ENCODE measurements at regions of chr14 and their contacts with region 1.

Region 1: DNA sequence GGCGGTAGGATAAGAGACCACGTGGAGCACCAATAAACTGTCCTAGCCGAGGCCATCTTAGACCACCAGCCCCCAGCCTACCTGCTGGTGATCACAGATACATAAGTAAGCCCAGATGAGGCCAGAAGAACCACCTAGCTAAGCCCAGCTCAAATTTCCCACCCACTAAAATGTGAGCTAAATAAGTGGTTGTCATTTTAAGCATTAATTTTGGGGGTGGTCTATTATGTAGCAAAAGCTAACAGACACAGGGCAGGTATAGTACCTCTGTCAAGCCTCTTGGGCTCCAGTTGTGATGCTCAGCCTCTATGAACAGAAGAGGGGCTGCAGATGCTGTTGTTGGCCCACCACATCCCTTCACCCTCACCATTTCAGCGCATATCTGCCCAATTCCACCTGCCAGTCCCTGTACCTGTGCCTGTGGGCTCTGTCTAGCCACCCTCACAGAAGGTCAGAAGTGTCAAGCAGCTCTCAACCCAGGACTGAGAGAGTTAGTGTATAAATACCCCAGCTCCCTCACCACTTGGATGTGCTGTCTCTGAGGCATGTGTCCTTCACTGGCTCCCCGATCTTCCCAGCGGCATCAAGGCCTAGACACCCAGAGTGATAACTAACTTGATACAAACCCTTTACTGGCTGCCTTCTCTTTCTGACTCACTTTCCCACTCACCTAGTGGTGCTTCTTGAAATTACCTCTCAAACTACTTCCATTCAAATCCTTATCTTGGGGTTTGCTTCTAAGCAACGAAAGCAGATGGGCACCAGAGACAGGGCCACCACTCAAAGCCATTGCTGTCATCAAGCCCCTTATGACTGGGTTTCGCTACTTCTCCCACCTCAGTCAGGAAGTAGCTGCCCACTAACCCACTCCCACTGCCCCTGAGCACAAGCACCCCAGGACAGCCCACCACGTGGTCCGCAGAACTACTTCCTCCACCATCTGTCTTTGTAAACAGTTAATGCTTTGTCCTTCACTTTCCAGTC is 17.4 kb downstream of the ZFP36L1 start:
- DNase-seq: no peak
- H3K4me3 ChIP-seq: no peak overlapping the region
- H3K27ac ChIP-seq: no peak overlapping the region
- H3K4me1 ChIP-seq: peaks cover 0 to 3% (median 0%) of the 10 kb centered on the region in 4 experiments; a peak in 2 of 7 replicates
- H3K27me3 ChIP-seq: no peaks in the 10 kb centered on the region
- CTCF ChIP-seq: peak in 2 of 3 experiments; percentile 26 to 48; a peak in 2 of 4 replicates
- EP300 ChIP-seq: no peak
- POLR2A ChIP-seq: no peak
- RAD21 ChIP-seq: peak; percentile 41 to 57

Region 2: DNA sequence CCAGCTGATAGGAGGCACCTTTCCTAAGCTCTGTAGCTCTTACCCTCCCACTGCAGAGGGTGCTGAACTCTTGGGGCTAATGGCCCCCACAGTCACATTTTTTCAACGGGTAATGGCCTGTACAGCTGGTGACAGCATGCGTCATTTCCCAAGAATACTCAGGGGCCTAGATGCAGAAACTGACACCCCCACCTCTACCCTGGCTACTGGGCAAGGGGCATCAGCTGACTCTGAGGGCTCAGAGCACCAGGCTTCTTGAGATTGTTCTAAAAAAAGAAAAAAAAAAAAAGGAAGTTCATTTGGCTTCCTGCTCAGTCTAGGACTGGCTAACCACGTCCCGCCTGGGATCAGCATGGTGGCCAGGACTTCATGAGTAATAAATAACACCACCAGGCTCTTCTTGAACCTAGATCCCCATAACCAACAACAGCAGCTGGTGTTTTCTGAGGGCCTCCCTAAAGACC is 17.8 kb before region 1 on chr14:
- CTCF ChIA-PET with region 1: interaction called, 28 read pairs
- POLR2A ChIA-PET with region 1: interaction called, 3 read pairs
- DNase-seq: no peak
- H3K4me3 ChIP-seq: no peak overlapping the region
- H3K27ac ChIP-seq: no peak overlapping the region
- H3K4me1 ChIP-seq: peaks cover 2 to 4% (median 4%) of the 10 kb centered on the region in 4 experiments; a peak in 5 of 7 replicates
- H3K27me3 ChIP-seq: no peaks in the 10 kb centered on the region
- CTCF ChIP-seq: no peak
- EP300 ChIP-seq: no peak
- POLR2A ChIP-seq: no peak
- RAD21 ChIP-seq: no peak

Region 3: DNA sequence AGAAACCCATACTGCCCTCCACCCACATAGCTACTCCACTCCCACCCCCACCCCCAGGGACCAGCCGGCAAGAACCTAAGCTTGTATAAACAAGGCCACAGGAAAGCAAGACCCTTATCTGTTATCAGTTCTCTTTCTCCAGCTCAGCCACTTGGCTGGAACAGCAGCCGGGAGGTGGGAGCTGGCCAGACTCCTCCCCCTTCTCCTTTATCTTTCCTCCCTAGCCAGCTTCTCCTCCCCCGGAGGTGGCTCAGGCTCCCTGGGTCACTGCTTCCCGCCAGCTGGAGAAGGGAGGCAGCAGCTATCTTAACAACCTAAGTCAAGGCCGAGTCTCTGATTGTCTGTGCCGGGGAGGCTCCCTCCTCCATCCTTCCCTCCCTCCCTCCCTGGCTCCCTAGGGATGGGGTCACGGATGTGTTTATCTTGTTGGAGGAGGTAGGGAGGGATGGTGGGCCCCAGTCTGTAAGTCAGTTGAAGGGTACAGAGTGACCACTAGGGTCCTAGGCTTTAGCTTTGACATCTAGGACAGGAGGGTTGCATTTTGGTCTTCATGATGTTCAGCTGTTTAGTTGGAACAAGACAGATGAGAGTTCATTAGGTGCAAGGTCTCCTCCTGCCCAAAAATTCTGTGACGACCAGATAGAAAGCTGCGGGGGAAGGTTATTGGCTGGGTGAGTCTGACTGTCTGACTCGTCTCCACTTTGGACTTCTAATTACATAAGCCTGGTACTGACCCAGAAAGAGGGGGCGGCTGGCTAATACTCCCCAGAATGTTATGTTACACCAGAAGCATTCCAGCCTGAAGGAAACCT is 12.3 kb before region 1 on chr14:
- CTCF ChIA-PET with region 1: interaction called, 28 read pairs
- POLR2A ChIA-PET with region 1: no interaction called
- DNase-seq: peak in 1 of 2 experiments; percentile 62
- H3K4me3 ChIP-seq: no peak overlapping the region
- H3K27ac ChIP-seq: no peak overlapping the region
- H3K4me1 ChIP-seq: peaks cover 2 to 12% (median 7%) of the 10 kb centered on the region in 4 experiments; a peak in 6 of 7 replicates
- H3K27me3 ChIP-seq: no peaks in the 10 kb centered on the region
- CTCF ChIP-seq: no peak
- EP300 ChIP-seq: no peak
- POLR2A ChIP-seq: no peak
- RAD21 ChIP-seq: no peak; a peak in 1 of 4 replicates

Region 4: GRCh38 chr14:68788996-68789820 is 13.8 kb after region 1 on chr14:
- CTCF ChIA-PET with region 1: interaction called, 31 read pairs
- POLR2A ChIA-PET with region 1: interaction called, 197 read pairs
- DNase-seq: peak in 1 of 2 experiments; percentile 71
- H3K4me3 ChIP-seq: peak overlapping the region in 3 of 4 experiments; percentile 9 to 91 (median 14); a peak in 3 of 8 replicates
- H3K27ac ChIP-seq: no peak overlapping the region
- H3K4me1 ChIP-seq: peaks cover 0 to 22% (median 12%) of the 10 kb centered on the region in 4 experiments; a peak in 6 of 7 replicates
- H3K27me3 ChIP-seq: no peaks in the 10 kb centered on the region
- CTCF ChIP-seq: peak; percentile 63 to 94 (median 67)
- EP300 ChIP-seq: no peak
- POLR2A ChIP-seq: no peak; a peak in 1 of 3 replicates
- RAD21 ChIP-seq: peak; percentile 71 to 79

Region 5: GRCh38 chr14:68807148-68807600 is 31.7 kb after region 1 on chr14:
- CTCF ChIA-PET with region 1: no interaction called
- POLR2A ChIA-PET with region 1: no interaction called
- DNase-seq: peak in 1 of 2 experiments; percentile 40
- H3K4me3 ChIP-seq: no peak overlapping the region
- H3K27ac ChIP-seq: no peak overlapping the region
- H3K4me1 ChIP-seq: peaks cover 0 to 4% (median under 1%) of the 10 kb centered on the region in 4 experiments; a peak in 3 of 7 replicates
- H3K27me3 ChIP-seq: no peaks in the 10 kb centered on the region
- CTCF ChIP-seq: no peak
- EP300 ChIP-seq: no peak
- POLR2A ChIP-seq: no peak
- RAD21 ChIP-seq: no peak

Region 6: GRCh38 chr14:69643443-69644164 is 868.2 kb after region 1 on chr14:
- CTCF ChIA-PET with region 1: no interaction called
- POLR2A ChIA-PET with region 1: no interaction called
- DNase-seq: no peak
- H3K4me3 ChIP-seq: no peak overlapping the region
- H3K27ac ChIP-seq: no peak overlapping the region
- H3K4me1 ChIP-seq: peaks cover 1 to 7% (median 5%) of the 10 kb centered on the region in 4 experiments; a peak in 4 of 7 replicates
- H3K27me3 ChIP-seq: no peaks in the 10 kb centered on the region
- CTCF ChIP-seq: no peak
- EP300 ChIP-seq: no peak
- POLR2A ChIP-seq: no peak
- RAD21 ChIP-seq: no peak